Upper lobe of right lung (tissue), 1 donor: ENCODE measurements at regions of chr11 and their contacts with region 1.

Region 1: DNA sequence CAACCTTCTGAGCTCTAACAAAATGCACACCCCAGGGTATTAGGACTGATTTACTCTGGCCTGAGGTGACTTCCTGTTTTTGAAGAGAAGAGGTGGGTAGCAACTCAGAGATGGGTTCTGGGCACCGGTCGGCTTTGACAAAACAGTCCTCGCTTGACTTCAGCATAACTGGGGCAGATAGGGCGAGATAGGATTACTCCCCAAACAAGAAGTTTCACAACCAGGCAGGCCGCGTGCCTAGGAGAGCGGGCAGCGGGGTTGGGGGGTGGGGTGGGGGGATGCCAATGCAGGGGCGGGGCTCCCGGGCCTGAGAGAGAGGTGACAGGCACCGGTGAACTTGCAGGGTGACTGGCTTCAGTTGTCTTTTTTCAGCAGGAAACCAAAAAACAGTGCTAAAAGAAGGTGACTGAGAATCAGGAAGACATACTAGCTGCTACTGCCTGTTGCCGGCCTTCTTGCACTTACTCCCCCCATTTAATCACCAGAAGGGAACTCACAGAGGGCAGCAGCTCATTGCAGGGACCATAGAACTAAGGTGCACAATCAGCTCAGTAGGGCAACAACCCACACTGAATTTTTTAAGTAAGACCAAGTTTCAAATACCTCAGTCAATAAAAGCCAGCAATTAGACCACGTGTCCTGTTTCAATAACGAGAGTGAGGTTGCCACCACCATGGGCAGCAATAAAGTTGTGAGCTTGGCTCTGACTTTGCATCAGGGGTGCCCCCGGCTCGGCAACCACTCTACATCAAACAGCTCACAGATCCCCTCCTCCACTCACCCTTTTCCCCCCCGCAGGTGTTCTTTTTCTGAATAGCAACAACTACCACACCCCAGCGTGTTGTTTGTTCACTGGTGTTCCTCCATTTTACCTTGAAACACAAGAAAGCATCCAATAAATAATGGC is 37.2 kb upstream of the ETS1 start:
- DNase-seq: no peak
- ATAC-seq: peak; percentile 61
- H3K4me3 ChIP-seq: no peak overlapping the region
- H3K27ac ChIP-seq: peak overlapping the region; percentile 30
- H3K4me1 ChIP-seq: peaks cover 20% of the 10 kb centered on the region
- H3K27me3 ChIP-seq: no peaks in the 10 kb centered on the region
- CTCF ChIP-seq: no peak

Region 2: GRCh38 chr11:128172046-128172878 is 452.3 kb before region 1 on chr11:
- intact Hi-C with region 1: loop called (anchors 10 kb)
- DNase-seq: peak; percentile 73
- ATAC-seq: peak; percentile 92
- H3K4me3 ChIP-seq: no peak overlapping the region
- H3K27ac ChIP-seq: no peak overlapping the region
- H3K4me1 ChIP-seq: no peaks in the 10 kb centered on the region
- H3K27me3 ChIP-seq: no peaks in the 10 kb centered on the region
- CTCF ChIP-seq: peak; percentile 84

Region 3: DNA sequence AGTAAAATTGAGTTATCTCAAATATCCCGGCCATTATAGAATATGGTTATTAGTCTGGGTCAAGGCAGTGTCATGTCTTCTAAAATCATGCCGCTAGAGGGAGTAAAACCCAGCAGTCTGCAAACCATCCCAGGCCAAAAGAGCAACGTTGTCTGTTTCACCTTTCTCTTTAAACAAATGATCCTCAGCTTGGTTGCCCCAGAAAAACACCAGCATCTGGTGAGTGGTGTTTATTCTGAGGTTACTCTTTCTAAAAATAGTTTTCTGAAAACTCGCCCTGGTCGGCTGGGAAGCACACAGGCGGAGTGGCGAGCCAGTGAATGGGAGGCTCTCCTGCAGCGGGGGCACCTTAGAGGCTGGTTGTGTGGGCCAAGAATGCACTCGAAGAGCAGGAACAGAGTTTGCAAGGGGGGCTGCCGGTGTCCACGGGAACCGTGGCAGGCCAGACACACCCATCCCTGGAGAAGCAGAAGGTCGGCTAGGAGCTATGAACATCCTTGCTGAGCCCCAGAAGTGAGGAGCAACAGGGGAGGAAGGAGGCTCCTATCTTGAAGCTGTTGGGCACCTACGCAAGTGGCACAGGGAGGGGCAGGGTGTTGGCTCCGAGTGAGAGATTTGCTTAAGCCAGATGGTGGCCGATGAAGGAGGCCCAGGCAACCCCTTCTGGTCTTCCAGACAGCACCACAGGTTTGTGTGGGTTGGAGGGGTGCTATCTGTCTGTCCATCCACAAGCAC is 334.2 kb before region 1 on chr11:
- intact Hi-C with region 1: loop called (anchors 10 kb)
- DNase-seq: peak; percentile 67
- ATAC-seq: peak; percentile 93
- H3K4me3 ChIP-seq: peak overlapping the region; percentile 29
- H3K27ac ChIP-seq: peak overlapping the region; percentile 79
- H3K4me1 ChIP-seq: peaks cover 22% of the 10 kb centered on the region
- H3K27me3 ChIP-seq: no peaks in the 10 kb centered on the region
- CTCF ChIP-seq: peak; percentile 87

Region 4: GRCh38 chr11:128831174-128832120 is 206.9 kb after region 1 on chr11:
- intact Hi-C with region 1: loop called (anchors 10 kb)
- DNase-seq: peak; percentile 86
- ATAC-seq: peak; percentile 91
- H3K4me3 ChIP-seq: peak overlapping the region; percentile 31
- H3K27ac ChIP-seq: peak overlapping the region; percentile 24
- H3K4me1 ChIP-seq: peaks cover 19% of the 10 kb centered on the region
- H3K27me3 ChIP-seq: no peaks in the 10 kb centered on the region
- CTCF ChIP-seq: peak; percentile 92